Sigmoid colon (tissue), 7 donors: ENCODE measurements at regions of chr1 and their contacts with region 1.

Region 1: DNA sequence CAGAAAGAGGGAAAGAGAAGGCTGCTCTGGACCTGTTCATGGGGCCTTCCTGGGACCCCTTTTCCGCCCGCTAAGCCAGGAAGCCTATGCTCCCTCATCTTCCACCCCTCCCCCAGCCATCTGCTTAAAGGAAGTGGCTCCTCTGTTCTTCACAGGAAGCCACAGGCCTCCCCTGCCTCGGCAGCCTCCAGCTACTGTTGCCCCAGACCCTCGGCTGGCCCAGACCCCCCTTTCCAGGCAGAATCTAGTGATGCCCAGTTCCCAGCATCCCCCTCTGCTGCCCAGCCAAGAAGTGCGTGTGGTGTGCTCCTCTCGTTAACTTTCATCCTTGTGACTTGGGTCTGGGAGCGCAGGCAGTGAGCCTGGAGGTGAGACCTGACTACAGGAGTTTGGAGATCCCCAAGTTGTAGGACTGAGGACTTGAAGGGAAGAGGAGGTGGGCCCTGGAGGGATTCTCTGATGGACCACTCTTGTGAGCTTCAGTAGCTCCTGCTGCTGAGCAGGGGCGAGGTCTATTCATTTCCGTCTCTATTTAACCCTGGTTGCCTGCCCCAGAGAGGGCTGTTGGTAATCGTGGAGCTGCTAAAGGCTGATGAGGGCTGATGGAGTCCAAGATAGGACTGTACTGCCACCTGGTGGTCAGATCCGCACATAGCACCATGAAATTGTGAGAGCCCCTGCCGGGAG is 9.1 kb downstream of the IFI6 start:
- DNase-seq: peak; percentile 90
- H3K4me3 ChIP-seq: no peak overlapping the region
- H3K27ac ChIP-seq: peak overlapping the region; percentile 5 to 29 (median 16)
- H3K4me1 ChIP-seq: peaks cover 0 to 13% (median 5%) of the 10 kb centered on the region in 4 donors
- H3K27me3 ChIP-seq: no peaks in the 10 kb centered on the region
- CTCF ChIP-seq: peak; percentile 80 to 95 (median 93)
- EP300 ChIP-seq: no peak
- POLR2A ChIP-seq: no peak

Region 2: GRCh38 chr1:27300341-27301051 is 362.4 kb before region 1 on chr1:
- intact Hi-C with region 1: loop called (anchors 2 kb)
- DNase-seq: peak; percentile 95
- H3K4me3 ChIP-seq: no peak overlapping the region
- H3K27ac ChIP-seq: peak overlapping the region; percentile 84 to 96 (median 92)
- H3K4me1 ChIP-seq: peaks cover 2 to 47% (median 46%) of the 10 kb centered on the region in 4 donors
- H3K27me3 ChIP-seq: no peaks in the 10 kb centered on the region
- CTCF ChIP-seq: peak; percentile 99
- EP300 ChIP-seq: no peak
- POLR2A ChIP-seq: no peak

Region 3: GRCh38 chr1:27321813-27322577 is 340.9 kb before region 1 on chr1 and contains the start of gene TMEM222:
- intact Hi-C with region 1: loop called (anchors 10 kb)
- DNase-seq: peak; percentile 99
- H3K4me3 ChIP-seq: peak within 1 kb of the TSS; percentile 66 to 92 (median 87)
- H3K27ac ChIP-seq: peak within 1 kb of the TSS; percentile 79 to 90 (median 88)
- H3K4me1 ChIP-seq: peaks cover 0 to 38% (median 25%) of the 10 kb centered on the region in 4 donors
- H3K27me3 ChIP-seq: no peaks in the 10 kb centered on the region
- CTCF ChIP-seq: peak in 2 of 4 experiments; percentile 15 to 23
- EP300 ChIP-seq: peak in 1 of 4 donors; percentile 76
- POLR2A ChIP-seq: peak; percentile 25 to 48
- total RNA-seq, gene TMEM222: 18.9 to 20.9 (median 19.6) TPM

Region 4: DNA sequence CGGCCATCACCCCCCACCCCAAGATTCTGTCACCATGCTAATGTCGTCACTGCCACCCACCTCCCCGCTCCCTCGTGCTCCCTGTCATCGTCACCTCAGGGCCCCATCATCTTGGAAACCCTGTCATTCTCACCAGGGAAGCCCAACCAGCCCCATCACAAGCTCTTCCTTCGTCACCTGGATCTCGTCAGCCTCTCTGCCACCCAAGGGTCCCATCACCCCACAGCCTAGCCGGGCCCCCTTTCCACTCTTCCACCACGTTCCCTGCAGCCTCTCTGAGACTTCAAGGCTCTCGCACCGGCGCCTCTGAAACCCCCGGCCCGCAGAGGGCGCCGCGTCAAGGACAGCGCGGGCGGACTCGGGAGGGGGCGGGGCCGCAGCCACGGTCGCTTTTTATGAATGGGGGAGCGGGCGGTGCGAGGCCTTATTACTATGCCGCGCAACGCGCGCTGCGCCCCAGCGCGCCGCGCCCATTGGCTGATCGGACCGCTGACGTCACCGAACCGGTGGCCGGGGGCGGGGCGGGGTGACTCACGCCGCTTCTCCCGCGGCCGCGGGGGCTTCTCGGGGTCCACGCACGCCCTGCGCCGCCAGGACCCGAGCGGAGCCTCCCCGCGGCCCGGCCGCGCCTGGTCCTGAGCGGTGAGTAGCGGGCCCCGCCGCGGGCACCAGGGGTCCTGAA is 270.6 kb before region 1 on chr1 and contains the start of gene GPR3:
- intact Hi-C with region 1: no loop called
- DNase-seq: peak; percentile 96
- H3K4me3 ChIP-seq: peak within 1 kb of the TSS; percentile 18 to 53 (median 46)
- H3K27ac ChIP-seq: peak within 1 kb of the TSS; percentile 38 to 78 (median 58)
- H3K4me1 ChIP-seq: peaks cover 0 to 28% (median 20%) of the 10 kb centered on the region in 4 donors
- H3K27me3 ChIP-seq: no peaks in the 10 kb centered on the region
- CTCF ChIP-seq: peak; percentile 30 to 53 (median 44)
- EP300 ChIP-seq: no peak
- POLR2A ChIP-seq: no peak
- total RNA-seq, gene GPR3: 0.36 to 2.0 TPM in 2 of 4 donors, not detected in the others

Region 5: DNA sequence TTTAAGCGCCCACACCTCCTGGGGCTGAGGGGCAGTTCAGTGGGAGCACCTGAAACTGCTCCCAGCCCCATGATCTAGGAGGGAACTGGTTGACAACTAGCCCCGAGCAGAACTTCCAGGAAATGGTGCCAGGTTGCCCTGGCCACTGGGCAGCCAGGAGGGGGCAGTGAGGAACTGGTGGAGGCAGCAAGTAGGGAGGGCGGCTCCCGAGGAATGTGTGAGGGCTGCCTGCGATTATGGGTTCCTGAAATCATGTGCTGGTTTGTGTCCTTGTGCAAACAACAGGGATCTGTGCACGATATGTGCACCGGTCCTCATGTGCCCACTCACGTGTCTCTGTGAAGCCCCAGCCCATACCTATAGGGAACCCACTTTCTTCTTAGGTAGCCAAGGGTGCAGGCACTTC is 260.5 kb before region 1 on chr1:
- intact Hi-C with region 1: loop called (anchors 5 kb)
- DNase-seq: peak; percentile 91
- H3K4me3 ChIP-seq: no peak overlapping the region
- H3K27ac ChIP-seq: peak overlapping the region; percentile 79 to 88 (median 81)
- H3K4me1 ChIP-seq: peaks cover 0 to 83% (median 67%) of the 10 kb centered on the region in 4 donors
- H3K27me3 ChIP-seq: no peaks in the 10 kb centered on the region
- CTCF ChIP-seq: peak; percentile 14 to 60 (median 44)
- EP300 ChIP-seq: no peak
- POLR2A ChIP-seq: no peak

Region 6: DNA sequence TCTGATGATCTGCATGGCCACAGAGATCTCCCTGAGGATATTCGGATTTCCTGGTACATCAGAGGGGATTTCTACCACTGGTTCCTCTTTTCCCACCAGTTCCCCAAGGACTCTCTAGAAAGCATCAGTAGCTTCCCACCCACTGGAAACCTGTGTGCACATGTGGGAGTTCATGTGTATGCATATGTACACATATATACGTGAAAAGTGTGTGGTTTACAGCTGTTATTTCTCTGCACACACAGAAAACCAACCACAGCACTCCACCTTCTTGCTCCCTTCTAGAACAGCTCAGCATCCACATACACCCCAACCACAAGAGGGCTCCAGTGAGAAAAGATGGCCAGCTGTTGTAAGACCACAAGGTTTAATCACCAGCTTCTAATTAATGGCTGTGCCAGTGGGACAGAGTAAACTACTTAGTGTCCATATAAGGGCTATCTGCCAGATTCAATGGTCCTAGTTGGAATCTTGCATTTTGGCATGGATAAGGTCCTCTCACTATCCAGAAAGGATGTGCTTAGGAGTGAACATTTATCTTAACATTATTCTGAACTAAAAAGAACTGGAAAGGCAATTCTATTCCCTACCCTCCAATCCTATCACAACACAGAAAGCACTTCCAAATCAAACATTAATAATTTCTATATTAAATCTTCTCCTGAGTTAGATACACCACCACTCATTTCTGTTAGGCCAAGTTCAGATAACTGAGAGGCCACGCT is 246.3 kb before region 1 on chr1:
- intact Hi-C with region 1: no loop called
- DNase-seq: no peak
- H3K4me3 ChIP-seq: no peak overlapping the region
- H3K27ac ChIP-seq: peak overlapping the region; percentile 81 to 91 (median 85)
- H3K4me1 ChIP-seq: peaks cover 3 to 54% (median 45%) of the 10 kb centered on the region in 4 donors
- H3K27me3 ChIP-seq: no peaks in the 10 kb centered on the region
- CTCF ChIP-seq: peak; percentile 54 to 63 (median 60)
- EP300 ChIP-seq: no peak
- POLR2A ChIP-seq: no peak

Region 7: DNA sequence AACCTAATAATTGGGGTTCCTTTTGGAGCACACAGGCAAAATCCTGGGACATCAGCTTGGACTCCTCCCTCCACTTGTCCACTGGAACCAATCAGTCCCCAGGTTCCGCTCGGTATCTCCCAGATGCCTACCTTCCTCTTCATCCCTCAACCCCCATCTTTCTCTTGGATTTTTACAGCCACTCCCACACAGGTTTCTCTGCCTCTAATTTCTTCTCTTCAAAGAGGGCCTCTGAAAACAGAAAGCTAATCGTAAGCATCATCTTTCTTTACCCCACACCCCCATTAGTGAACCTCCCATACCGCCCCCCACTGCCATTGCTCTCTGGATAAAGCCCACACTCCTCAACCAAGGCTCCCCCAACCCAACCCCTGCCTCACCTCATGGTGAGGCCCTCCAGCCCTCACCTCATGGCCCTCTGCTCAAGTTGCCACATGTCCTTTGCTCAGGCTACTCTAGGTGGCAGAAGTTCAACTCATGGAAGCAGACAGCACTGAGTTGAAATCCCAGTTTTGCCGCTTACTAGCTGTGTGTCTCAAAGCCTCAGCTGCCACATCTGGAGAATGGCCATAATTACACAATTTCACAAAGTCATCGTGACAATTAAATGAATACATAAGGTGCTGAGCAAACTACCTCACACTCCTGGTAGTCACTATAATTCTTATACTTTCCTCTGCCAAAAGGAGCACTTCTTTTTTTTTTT is 154.7 kb before region 1 on chr1:
- intact Hi-C with region 1: no loop called
- DNase-seq: no peak
- H3K4me3 ChIP-seq: no peak overlapping the region
- H3K27ac ChIP-seq: peak overlapping the region in 2 of 4 donors; percentile 18 to 30
- H3K4me1 ChIP-seq: peaks cover 0 to 28% (median 25%) of the 10 kb centered on the region in 4 donors
- H3K27me3 ChIP-seq: no peaks in the 10 kb centered on the region
- CTCF ChIP-seq: no peak
- EP300 ChIP-seq: no peak
- POLR2A ChIP-seq: no peak

Region 8: DNA sequence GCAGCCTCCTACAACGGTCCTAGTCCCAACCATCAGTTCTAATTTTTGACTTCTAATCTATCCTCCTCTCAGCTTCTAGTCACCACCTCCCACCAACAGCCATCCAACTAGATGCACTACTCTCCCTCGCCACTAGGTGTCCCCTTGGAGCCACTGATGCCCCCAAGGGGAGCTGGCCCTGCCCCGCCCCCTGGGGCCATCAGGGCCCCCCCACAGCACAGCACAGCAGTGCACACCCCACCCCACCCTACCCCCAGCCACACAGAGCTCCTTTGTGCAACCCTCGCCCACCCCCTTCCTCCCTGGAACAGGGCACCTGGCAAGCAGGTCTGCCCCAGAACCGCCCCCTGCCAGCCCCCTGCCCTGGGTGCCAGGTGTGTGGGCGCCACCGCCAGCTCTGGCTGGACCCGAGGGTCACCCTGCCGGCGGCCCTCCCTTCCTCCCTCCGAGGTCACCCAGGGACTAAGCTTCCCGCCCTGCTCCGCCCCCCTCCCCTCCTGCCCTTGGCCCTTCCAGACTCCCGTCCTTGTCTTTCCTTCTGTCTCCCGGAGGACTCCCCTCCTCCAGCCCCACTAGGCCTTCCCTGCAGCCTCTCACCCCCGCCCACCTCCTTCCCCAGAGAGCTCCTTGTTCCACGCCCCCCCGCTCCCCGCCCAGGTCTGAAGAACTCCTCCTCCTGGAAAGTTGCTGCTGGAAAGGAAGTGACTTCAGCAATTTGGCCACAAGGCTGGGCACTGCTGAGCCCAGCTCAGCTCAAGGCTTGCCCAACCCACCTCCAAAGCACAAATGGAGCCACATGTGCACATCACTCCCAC is 105.9 kb before region 1 on chr1:
- intact Hi-C with region 1: loop called (anchors 5 kb)
- DNase-seq: peak; percentile 98
- H3K4me3 ChIP-seq: peak overlapping the region in 3 of 4 donors; percentile 13 to 34 (median 34)
- H3K27ac ChIP-seq: peak overlapping the region; percentile 82 to 98 (median 90)
- H3K4me1 ChIP-seq: peaks cover 0 to 73% (median 68%) of the 10 kb centered on the region in 4 donors
- H3K27me3 ChIP-seq: no peaks in the 10 kb centered on the region
- CTCF ChIP-seq: peak; percentile 85 to 96 (median 94)
- EP300 ChIP-seq: no peak
- POLR2A ChIP-seq: no peak

Region 9: DNA sequence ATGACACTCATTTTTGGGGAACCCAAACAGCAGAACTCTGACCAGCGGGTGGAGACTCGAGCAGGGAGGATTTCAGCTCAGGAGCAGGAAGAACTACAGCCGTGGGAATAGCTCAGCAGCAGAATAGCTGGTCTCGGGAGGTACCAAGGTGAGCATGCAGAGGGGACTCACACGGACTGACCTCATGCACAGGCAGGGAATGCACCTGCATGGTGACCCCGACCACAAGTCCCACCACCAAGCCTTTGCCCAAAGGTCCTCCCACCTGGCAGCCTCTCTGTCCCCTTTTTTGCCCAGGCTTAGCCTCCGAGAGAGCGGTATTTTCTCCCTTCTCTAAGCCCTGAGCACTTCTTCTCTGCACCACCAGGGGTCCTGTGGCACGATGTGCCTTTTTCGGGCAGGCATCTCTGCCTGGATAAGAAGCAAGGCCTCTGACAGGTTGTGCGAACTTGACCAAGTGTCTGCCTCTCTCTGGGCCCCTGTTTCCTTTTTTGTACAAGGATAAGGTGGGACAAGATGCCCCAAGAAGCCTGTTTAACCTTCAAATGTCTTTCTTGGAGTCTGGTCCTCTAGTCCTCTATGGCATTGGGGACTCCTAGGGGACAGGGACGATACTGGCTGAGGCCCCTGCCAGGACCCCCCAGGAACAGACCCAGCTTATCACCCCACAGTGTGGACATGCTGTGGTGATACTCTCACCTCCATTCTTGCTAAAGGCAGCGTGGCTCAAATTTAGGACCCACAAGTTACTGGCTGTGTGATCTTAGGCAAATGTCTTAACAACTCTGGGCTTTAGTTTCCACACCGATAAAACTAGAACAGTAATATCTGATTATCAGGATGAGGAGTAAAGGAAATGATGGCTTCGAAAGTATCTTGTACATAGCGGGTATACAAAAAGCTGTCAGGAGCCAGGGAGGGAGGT is 18.9 kb before region 1 on chr1:
- intact Hi-C with region 1: loop called (anchors 2 kb)
- DNase-seq: no peak
- H3K4me3 ChIP-seq: no peak overlapping the region
- H3K27ac ChIP-seq: no peak overlapping the region
- H3K4me1 ChIP-seq: peaks cover 0 to 7% (median 5%) of the 10 kb centered on the region in 4 donors
- H3K27me3 ChIP-seq: no peaks in the 10 kb centered on the region
- CTCF ChIP-seq: peak; percentile 28 to 87 (median 68)
- EP300 ChIP-seq: no peak
- POLR2A ChIP-seq: no peak